Head of caudate nucleus (tissue), 42 donors: ENCODE measurements at regions of chr4 and their contacts with region 1.

Region 1: GRCh38 chr4:110196206-110196870 is 2.1 kb downstream of the ELOVL6 start:
- DNase-seq: peak; percentile 15 to 82 (median 58)

Region 2: DNA sequence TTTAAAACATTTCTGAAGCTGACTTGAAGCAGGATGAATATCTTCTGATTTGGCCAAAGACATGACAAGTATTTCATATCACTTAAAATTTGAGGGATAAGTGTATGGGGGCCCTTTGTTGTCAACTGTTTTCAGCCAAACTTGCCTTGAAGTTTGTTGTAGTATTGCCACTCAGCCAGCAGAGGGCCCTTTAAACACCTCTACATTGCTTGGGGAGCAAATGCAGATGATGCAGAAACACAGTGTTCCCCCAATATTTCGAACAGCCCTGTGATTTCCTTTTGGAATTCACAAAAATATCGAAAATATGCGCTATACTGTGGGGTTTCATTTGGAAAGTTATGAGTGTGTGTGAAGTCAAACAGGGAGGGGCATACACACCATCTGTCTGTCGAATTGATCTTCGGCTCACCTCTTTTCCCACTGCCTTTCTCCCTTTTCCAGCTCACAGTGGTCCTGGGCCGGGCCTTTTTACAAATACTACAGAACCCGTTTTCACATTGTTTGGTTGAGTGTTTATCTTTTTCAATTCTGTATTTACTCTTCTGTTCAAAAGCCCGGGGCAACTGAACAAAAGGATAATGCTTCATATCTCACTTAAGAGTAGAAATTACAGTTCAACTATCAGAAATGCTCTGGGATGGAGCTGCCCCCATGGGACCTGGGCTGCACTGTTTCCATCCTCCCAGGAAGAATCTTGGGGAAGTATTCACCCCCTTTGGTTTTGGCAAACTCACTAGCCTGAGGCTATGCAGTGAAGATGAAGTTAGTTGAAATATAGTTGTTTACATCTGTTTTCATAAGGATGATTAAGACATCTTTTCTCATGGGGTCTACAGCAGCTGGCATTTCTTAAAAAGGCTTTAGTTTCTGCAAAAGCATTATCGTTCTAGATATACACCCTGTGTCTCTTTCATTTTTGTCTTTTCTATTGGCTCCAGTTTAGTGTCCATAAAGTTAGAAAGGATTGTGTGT is 146.1 kb before region 1 on chr4:
- intact Hi-C with region 1: loop called (anchors 5 kb)
- DNase-seq: peak in 38 of 42 donors; percentile 26 to 87 (median 68)